Sciatic nerve (tissue), 2 donors: ENCODE measurements at regions of chr1 and their contacts with region 1.

Region 1: GRCh38 chr1:173195596-173196088 is 11.5 kb downstream of the TNFSF4 start:
- DNase-seq: no peak
- ATAC-seq: no peak

Region 2: DNA sequence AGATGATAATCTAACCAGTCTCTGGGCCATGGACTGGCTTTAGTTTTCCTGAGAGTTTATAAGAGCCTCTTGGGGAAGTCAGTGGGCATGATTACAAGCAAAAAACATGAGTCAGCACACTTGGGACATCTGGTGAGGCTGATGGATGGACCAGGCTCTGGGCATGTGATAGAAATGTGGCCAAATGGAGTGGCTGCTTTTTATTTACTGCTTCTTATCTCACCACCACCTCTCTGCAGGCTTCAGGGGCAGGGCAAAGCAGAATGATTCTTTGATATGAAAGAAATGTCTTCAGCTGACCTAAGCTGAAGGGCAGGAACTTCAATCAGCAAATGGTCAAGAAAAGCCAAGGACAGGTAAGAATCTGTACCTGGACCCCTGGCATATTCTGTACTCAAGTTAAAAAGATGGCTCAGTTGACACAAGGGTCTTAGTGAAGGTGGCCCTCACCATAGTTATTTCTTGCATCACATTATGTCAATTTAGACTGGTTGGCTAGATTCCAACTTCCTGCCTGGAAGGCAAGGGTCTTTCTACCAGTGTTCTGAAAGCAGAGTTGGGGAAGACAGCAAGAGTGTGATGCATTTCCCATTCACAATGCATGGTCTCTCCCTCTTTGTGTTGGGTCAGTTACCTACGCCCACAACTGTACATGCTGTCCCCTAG is 373.9 kb before region 1 on chr1:
- intact Hi-C with region 1: loop called (anchors 5 kb)
- DNase-seq: no peak
- ATAC-seq: no peak

Region 3: GRCh38 chr1:173212952-173213491 is 17.4 kb after region 1 on chr1:
- intact Hi-C with region 1: loop called (anchors 1 kb)
- DNase-seq: no peak
- ATAC-seq: no peak

Region 4: GRCh38 chr1:173925306-173926242 is 729.9 kb after region 1 on chr1:
- intact Hi-C with region 1: no loop called
- DNase-seq: no peak
- ATAC-seq: no peak